BJ (cell line): ENCODE measurements at regions of chr1 and their contacts with region 1.

Region 1: GRCh38 chr1:31548907-31549808 is 27.2 kb upstream of the TINAGL1 start:
- DNase-seq: no peak
- H3K4me3 ChIP-seq: peak overlapping the region; percentile 16
- H3K27me3 ChIP-seq: no peaks in the 10 kb centered on the region; the same call in 1 of the 2 replicates
- CTCF ChIP-seq: peak; percentile 88

Region 2: DNA sequence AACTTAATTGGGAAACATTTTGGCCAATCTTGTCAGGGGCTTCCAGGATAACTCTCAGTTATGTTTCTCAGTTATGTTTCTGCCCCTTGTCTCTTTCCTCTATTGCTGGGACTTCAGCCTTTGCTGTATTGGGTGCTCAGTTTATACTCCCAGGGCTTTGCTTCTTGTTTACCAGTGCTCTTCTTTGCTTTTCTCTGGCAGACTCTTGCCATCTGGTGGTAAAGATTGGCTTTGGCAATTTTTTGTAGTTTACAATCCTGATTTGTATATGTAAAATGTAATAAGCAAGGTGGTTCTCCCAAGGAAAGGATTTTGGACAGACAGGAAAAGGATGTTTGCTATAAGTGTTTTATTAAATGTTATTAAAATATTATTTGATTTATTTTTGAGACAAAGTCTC is 214.2 kb before region 1 on chr1:
- CTCF ChIA-PET with region 1: no interaction called
- POLR2A ChIA-PET with region 1: no interaction called
- DNase-seq: peak; percentile 8
- H3K4me3 ChIP-seq: no peak overlapping the region
- H3K27me3 ChIP-seq: no peaks in the 10 kb centered on the region
- CTCF ChIP-seq: peak; percentile 67

Region 3: DNA sequence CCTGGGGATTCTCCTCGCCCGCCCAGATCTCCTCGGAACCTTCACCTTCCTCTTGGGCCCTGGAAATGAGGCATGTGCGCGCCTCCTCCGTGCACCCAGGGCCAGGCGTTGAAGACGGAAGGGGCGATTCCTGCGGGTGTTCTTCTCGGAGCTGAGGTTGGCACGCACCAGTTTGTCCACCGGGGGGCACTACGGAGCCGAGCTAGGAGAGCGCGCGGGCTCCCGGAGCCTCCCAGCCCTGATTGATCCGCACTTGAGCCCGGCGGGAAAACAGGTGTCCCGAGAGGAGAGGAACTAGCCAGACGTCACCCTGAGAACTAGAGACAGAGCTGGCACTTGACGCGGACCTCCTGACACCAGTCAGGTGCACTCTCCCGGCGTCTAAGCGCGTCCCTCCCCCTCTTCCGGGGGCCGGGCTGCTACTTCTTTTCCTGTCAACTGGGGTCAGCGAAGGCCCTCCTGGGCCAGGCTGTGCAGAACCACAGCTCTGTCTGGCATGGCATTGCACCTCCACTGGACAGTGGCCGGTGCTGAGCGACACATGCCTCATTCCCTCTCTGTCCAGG is 154.4 kb before region 1 on chr1:
- CTCF ChIA-PET with region 1: interaction called, 79 read pairs
- POLR2A ChIA-PET with region 1: no interaction called
- DNase-seq: no peak
- H3K4me3 ChIP-seq: no peak overlapping the region
- H3K27me3 ChIP-seq: no peaks in the 10 kb centered on the region
- CTCF ChIP-seq: peak; percentile 95

Region 4: DNA sequence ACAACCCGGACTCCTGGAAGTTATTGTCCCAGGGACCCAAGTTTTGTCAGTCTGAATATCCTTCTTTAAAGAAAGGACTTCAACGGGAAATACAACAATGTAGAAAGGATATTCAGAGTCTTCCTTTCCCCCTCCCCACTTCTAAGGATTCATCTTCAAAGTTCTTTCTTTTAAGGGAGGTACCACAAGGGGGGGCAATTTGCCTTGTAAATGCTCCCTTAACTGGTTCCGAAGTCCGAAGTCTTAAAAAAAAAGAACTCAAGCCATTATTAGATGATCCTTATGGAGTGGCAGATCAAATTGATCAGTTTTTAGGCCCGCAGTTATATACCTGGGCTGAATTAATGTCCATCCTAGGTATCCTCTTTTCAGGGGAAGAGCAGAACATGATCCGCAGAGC is 89.1 kb before region 1 on chr1:
- CTCF ChIA-PET with region 1: interaction called, 31 read pairs
- POLR2A ChIA-PET with region 1: no interaction called
- DNase-seq: no peak
- H3K4me3 ChIP-seq: no peak overlapping the region
- H3K27me3 ChIP-seq: peaks cover 8% of the 10 kb centered on the region
- CTCF ChIP-seq: 0 out of 2 replicates have a peak, but pooled peaks have one; percentile 20

Region 5: GRCh38 chr1:31564134-31564989 is 15.2 kb after region 1 on chr1:
- CTCF ChIA-PET with region 1: interaction called, 21 read pairs
- POLR2A ChIA-PET with region 1: no interaction called
- DNase-seq: no peak
- H3K4me3 ChIP-seq: no peak overlapping the region
- H3K27me3 ChIP-seq: peaks cover 1% of the 10 kb centered on the region; the same call in 1 of the 2 replicates
- CTCF ChIP-seq: peak; percentile 80

Region 6: DNA sequence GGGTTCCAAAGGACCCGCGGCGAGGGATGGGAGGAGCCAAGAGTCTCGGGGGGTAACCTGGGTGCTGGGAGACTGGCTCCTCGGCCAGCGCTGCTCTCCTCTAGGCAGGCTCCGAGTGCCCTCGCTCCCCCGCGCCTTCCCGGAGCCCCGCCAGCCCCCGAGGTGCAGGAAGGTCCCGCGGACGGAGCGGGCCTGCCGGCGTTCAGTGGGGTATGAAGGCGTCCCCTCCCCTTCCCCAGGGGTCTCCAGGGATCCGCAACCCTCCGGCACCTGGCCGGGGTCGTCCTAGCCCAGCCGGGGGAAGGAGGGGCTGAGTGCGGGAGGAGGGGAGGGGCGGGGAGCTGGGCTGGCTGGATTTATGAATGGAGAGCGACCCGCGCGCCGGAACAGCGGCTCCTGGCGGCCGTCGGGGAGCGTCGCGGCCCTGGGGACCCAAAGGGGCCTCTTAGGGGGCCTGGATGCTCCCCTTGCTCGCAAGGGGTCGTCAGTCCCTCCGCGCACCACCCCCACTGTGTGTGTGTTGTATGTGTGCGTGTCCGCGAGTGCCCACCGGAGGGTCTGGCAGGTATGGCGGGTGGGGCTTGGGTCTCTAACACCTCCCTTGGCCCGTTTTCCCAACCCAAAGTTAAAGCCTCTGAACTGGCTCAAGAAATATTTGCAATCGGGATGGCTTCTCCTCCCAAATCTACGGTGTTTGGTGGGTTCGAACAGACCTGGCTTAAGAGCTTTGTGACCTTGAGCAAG is 68.9 kb after region 1 on chr1:
- CTCF ChIA-PET with region 1: interaction called, 10 read pairs
- POLR2A ChIA-PET with region 1: no interaction called
- DNase-seq: no peak
- H3K4me3 ChIP-seq: peak overlapping the region; percentile 47
- H3K27me3 ChIP-seq: peaks cover 12% of the 10 kb centered on the region
- CTCF ChIP-seq: peak; percentile 95